ENCODE measurements at regions of chr5 and their contacts with region 1.

Region 1: DNA sequence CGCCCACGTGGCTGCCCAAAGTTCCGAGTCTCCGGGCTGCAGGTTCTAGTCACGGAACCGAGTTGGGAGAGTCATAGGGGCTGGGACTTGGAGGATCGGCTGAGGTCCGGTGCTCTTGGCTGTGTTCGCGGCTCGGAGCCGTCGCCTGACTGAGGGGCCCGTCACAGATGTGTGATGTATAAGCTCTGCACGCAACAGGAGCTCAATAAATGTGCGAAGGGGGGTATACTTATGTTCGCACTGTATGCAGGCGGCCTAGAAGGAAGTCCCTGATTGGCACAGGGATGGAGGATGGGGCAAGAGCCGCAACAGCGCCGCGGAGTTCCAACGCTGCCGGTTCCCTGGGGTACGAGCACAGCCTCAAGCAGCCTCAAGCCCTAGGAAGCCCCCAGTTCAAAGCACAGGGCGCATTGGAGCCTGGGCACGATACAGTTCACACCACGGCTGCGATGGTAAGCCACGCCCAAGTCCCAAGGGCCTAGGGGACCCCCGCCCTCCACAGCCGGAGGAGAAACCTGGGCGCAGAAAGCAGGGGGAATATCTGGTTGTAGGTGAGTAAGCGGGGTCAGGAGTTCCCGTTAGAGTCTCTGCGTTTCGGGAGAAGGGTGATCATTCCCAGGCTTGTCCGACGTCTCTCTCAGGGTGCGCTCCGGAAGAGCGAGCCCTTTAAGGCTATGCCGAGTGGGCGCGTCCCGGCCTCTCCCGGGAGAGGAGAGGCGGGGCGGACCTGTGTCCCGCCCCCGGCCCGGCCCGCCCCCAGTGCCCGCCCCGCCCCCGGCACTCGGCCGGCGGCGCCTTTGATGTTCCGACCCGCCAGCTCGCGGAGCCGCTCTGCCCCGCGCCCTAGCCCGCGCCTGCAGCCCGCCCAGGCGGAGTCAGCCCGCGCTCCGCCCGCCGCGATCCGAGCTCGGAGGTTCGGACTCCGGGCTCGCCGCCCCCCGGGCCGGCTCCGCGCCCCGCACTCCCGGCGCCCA is at the start of gene TCF7:
- DNase-seq: peak; percentile 79
- ATAC-seq: peak; percentile 53
- H3K4me3 Mint-ChIP-seq: peak within 1 kb of the TSS; percentile 73
- H3K27ac Mint-ChIP-seq: peak within 1 kb of the TSS; percentile 84
- H3K4me1 Mint-ChIP-seq: peaks cover 66% of the 10 kb centered on the region
- H3K27me3 Mint-ChIP-seq: no peaks in the 10 kb centered on the region
- CTCF ChIP-seq: no peak
- total RNA-seq, gene TCF7: 47.4 to 50.3 TPM

Region 2: DNA sequence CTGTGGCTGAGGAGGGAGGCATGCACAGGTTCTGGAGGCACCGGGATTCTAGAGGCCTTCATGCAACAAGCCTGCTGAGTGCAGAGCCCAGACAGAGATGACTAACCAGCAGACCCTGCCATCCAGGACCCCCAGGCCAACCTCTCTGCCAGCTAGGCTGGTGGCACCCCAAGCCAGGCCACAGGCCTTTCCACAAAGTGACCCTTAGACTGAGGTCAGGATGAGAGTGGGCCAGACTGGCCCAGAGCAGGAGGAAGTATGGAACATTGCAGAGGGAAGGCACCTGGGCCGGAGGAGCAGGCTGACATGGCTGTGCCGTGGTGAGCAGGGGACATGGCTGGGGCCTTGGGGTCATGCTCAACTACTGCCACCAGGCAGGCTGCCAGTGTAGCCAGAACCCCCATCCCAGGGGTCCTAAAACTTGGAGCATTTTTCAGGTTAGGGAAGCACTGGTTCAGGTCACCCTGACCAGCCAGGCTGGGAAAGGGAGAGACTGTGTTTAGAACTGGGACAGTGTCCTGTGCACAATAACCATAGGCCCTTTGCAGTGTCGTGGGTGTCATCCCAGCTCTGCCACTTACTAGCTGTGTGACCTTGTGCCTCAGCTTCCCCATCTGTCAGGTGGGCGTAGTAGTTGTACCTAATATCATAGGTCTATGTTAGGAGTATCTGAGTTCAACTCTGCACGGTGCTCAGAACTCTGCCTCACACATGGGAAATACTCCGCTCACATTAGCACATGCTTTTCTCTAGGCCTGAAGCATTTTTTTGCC is 17.6 kb after region 1 on chr5:
- CTCF ChIA-PET with region 1: no interaction called
- POLR2A ChIA-PET with region 1: no interaction called
- intact Hi-C with region 1: loop called (anchors 2 kb)
- DNase-seq: peak; percentile 35
- ATAC-seq: peak; percentile 2
- H3K4me3 Mint-ChIP-seq: peak overlapping the region; percentile 54
- H3K27ac Mint-ChIP-seq: peak overlapping the region; percentile 82
- H3K4me1 Mint-ChIP-seq: peaks cover 97% of the 10 kb centered on the region
- H3K27me3 Mint-ChIP-seq: no peaks in the 10 kb centered on the region
- CTCF ChIP-seq: no peak

Region 3: GRCh38 chr5:134304311-134304710 is 190.1 kb after region 1 on chr5:
- CTCF ChIA-PET with region 1: no interaction called
- POLR2A ChIA-PET with region 1: no interaction called
- intact Hi-C with region 1: no loop called
- DNase-seq: no peak
- ATAC-seq: no peak
- H3K4me3 Mint-ChIP-seq: no peak overlapping the region
- H3K27ac Mint-ChIP-seq: no peak overlapping the region
- H3K4me1 Mint-ChIP-seq: peaks cover 7% of the 10 kb centered on the region
- H3K27me3 Mint-ChIP-seq: no peaks in the 10 kb centered on the region
- CTCF ChIP-seq: no peak

Region 4: GRCh38 chr5:134738133-134738962 is 624.2 kb after region 1 on chr5 and contains the start of gene CAMLG:
- CTCF ChIA-PET with region 1: no interaction called
- POLR2A ChIA-PET with region 1: no interaction called
- intact Hi-C with region 1: no loop called
- DNase-seq: peak; percentile 98
- ATAC-seq: peak; percentile 97
- H3K4me3 Mint-ChIP-seq: peak within 1 kb of the TSS; percentile 91
- H3K27ac Mint-ChIP-seq: peak within 1 kb of the TSS; percentile 86
- H3K4me1 Mint-ChIP-seq: peaks cover 18% of the 10 kb centered on the region
- H3K27me3 Mint-ChIP-seq: no peaks in the 10 kb centered on the region
- CTCF ChIP-seq: peak; percentile 59
- total RNA-seq, gene CAMLG: 33.8 to 35.9 TPM

Measured in activated CD8-positive, alpha-beta T cell treated with anti-CD3 and anti-CD28 coated beads for 36 hours (primary cell).